T-cell (primary cell): ENCODE measurements at regions of chr21 and their contacts with region 1.

Region 1: GRCh38 chr21:35438643-35439404 is 389.7 kb upstream of the RUNX1 start:
- DNase-seq: peak in 5 of 35 experiments; percentile 0 to 25 (median 18)
- ATAC-seq: peak; percentile 66 to 80 (median 74)
- H3K4me3 ChIP-seq: peak overlapping the region in 1 of 2 donors; percentile 44
- H3K4me3 Mint-ChIP-seq: peak overlapping the region; percentile 37 to 54 (median 45)
- H3K27ac ChIP-seq: no peak overlapping the region
- H3K27ac Mint-ChIP-seq: peak overlapping the region; percentile 77 to 82
- H3K4me1 ChIP-seq: peaks cover 14 to 19% of the 10 kb centered on the region in 2 experiments
- H3K4me1 Mint-ChIP-seq: peaks cover 16 to 28% (median 26%) of the 10 kb centered on the region in 3 donors
- H3K27me3 ChIP-seq: peaks cover 0 to 6% of the 10 kb centered on the region in 2 experiments
- H3K27me3 Mint-ChIP-seq: peaks cover 0 to 21% of the 10 kb centered on the region in 2 donors

Region 2: GRCh38 chr21:35408401-35408800 is 30.4 kb before region 1 on chr21:
- CTCF ChIA-PET with region 1: interaction called in 1 of 2 experiments, 10 read pairs
- POLR2A ChIA-PET with region 1: no interaction called
- DNase-seq: no peak
- ATAC-seq: no peak
- H3K4me3 ChIP-seq: no peak overlapping the region
- H3K4me3 Mint-ChIP-seq: no peak overlapping the region
- H3K27ac ChIP-seq: no peak overlapping the region
- H3K27ac Mint-ChIP-seq: no peak overlapping the region
- H3K4me1 ChIP-seq: peaks cover 0 to 7% of the 10 kb centered on the region in 2 experiments
- H3K4me1 Mint-ChIP-seq: peaks cover 4 to 29% (median 9%) of the 10 kb centered on the region in 3 donors
- H3K27me3 ChIP-seq: peaks cover 0 to 6% of the 10 kb centered on the region in 2 experiments
- H3K27me3 Mint-ChIP-seq: peaks cover 10 to 27% of the 10 kb centered on the region in 2 donors

Region 3: DNA sequence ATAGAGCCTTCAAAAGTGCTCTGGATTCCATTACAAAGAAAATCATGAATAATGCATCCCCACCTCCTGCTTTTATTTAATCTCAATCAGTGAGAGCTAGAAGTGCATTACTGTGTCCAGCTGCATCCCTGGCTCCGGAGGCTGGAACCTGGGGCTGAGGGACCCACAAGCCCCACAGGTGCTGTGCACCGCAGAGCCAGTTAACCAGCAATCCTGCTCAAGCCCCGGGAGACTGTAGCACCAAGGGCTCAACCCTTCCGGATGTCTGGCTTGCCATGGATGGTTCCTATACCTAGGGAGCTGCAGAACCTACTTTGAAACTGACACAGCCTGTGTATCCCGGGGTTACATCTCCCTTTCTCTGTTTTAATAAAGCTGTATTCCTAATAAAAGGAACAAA is 66.2 kb after region 1 on chr21:
- CTCF ChIA-PET with region 1: no interaction called
- POLR2A ChIA-PET with region 1: interaction called in 1 of 2 experiments, 11 read pairs
- DNase-seq: no peak
- ATAC-seq: no peak
- H3K4me3 ChIP-seq: no peak overlapping the region
- H3K4me3 Mint-ChIP-seq: peak overlapping the region in 1 of 3 donors; percentile 0
- H3K27ac ChIP-seq: peak overlapping the region; percentile 75
- H3K27ac Mint-ChIP-seq: peak overlapping the region; percentile 88 to 94
- H3K4me1 ChIP-seq: peaks cover 34 to 42% of the 10 kb centered on the region in 2 experiments
- H3K4me1 Mint-ChIP-seq: peaks cover 51 to 79% (median 52%) of the 10 kb centered on the region in 3 donors
- H3K27me3 ChIP-seq: peaks cover 0 to 2% of the 10 kb centered on the region in 2 experiments
- H3K27me3 Mint-ChIP-seq: peaks cover 0 to 5% of the 10 kb centered on the region in 2 donors

Region 4: GRCh38 chr21:36097266-36098230 is 658.7 kb after region 1 on chr21:
- CTCF ChIA-PET with region 1: no interaction called
- POLR2A ChIA-PET with region 1: no interaction called
- DNase-seq: no peak
- ATAC-seq: no peak
- H3K4me3 ChIP-seq: no peak overlapping the region
- H3K4me3 Mint-ChIP-seq: no peak overlapping the region
- H3K27ac ChIP-seq: no peak overlapping the region
- H3K27ac Mint-ChIP-seq: no peak overlapping the region
- H3K4me1 ChIP-seq: no peaks in the 10 kb centered on the region
- H3K4me1 Mint-ChIP-seq: no peaks in the 10 kb centered on the region
- H3K27me3 ChIP-seq: peaks cover 0 to 16% of the 10 kb centered on the region in 2 experiments
- H3K27me3 Mint-ChIP-seq: peaks cover 8 to 20% of the 10 kb centered on the region in 2 donors